T-cell (primary cell): ENCODE measurements at regions of chr4 and their contacts with region 1.

Region 1: GRCh38 chr4:145125396-145125795 is 27.3 kb downstream of the ABCE1 start:
- DNase-seq: no peak
- ATAC-seq: no peak
- H3K4me3 ChIP-seq: no peak overlapping the region
- H3K4me3 Mint-ChIP-seq: peak overlapping the region in 1 of 3 donors; percentile 17
- H3K27ac ChIP-seq: peak overlapping the region; percentile 75
- H3K27ac Mint-ChIP-seq: peak overlapping the region; percentile 64 to 89
- H3K4me1 ChIP-seq: peaks cover 0 to 5% of the 10 kb centered on the region in 2 experiments
- H3K4me1 Mint-ChIP-seq: peaks cover 0 to 18% (median 17%) of the 10 kb centered on the region in 3 donors
- H3K27me3 ChIP-seq: no peaks in the 10 kb centered on the region
- H3K27me3 Mint-ChIP-seq: no peaks in the 10 kb centered on the region

Region 2: DNA sequence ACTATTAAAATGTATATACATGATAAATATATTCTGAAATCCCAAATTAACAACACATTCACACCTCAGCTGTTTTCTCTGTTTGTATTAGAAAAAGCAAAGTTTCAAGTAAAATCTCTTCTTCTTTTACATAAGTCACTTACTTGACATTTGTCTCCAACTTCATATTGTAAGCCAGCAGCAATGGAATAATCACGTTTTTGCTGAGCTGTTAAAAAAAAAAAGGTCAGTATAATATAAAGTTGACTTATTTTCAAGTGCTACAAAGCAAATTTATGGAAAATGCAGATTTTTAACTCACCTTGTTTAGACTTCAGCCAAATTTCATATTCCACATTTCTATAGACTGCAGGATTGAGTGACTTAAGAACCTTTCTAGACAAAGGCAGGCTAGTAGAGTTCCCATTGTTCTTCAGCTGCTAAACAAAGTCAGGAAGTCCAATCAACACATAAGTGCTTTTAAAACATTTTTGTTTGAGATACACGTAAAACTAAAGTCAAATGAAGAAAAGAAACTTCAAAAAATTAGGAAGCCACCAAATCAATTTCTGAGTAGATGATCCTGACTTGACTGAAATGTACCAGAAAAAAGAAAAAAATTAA is 30.0 kb after region 1 on chr4:
- CTCF ChIA-PET with region 1: no interaction called
- POLR2A ChIA-PET with region 1: no interaction called
- DNase-seq: no peak
- ATAC-seq: no peak
- H3K4me3 ChIP-seq: no peak overlapping the region
- H3K4me3 Mint-ChIP-seq: no peak overlapping the region
- H3K27ac ChIP-seq: no peak overlapping the region
- H3K27ac Mint-ChIP-seq: no peak overlapping the region
- H3K4me1 ChIP-seq: no peaks in the 10 kb centered on the region
- H3K4me1 Mint-ChIP-seq: peaks cover 0 to 4% (median 2%) of the 10 kb centered on the region in 3 donors
- H3K27me3 ChIP-seq: no peaks in the 10 kb centered on the region
- H3K27me3 Mint-ChIP-seq: no peaks in the 10 kb centered on the region

Region 3: GRCh38 chr4:145186729-145187128 is 61.3 kb after region 1 on chr4:
- CTCF ChIA-PET with region 1: no interaction called
- POLR2A ChIA-PET with region 1: interaction called in 1 of 2 experiments, 10 read pairs
- DNase-seq: no peak
- ATAC-seq: no peak
- H3K4me3 ChIP-seq: no peak overlapping the region
- H3K4me3 Mint-ChIP-seq: no peak overlapping the region
- H3K27ac ChIP-seq: no peak overlapping the region
- H3K27ac Mint-ChIP-seq: no peak overlapping the region
- H3K4me1 ChIP-seq: no peaks in the 10 kb centered on the region
- H3K4me1 Mint-ChIP-seq: peaks cover 0 to 2% (median 0%) of the 10 kb centered on the region in 3 donors
- H3K27me3 ChIP-seq: no peaks in the 10 kb centered on the region
- H3K27me3 Mint-ChIP-seq: no peaks in the 10 kb centered on the region

Region 4: DNA sequence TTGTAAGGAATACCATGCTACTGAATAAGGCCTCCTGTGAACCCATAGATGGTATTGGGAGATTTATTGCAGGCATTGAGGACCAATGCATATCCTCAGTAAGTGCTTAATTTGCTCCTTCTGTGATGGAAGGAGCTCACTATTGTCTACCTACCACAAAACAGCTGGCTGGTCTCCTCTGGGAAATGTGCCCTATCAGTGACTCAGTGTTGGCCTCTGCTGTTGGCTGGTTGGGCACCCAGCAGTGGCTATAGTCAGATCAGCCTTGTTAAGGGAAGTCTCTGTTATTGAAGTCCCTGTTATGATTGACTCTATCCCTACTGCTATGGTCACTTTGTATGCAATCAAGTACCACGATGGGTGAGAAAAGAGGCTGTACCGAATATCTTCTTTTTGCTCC is 82.5 kb after region 1 on chr4:
- CTCF ChIA-PET with region 1: no interaction called
- POLR2A ChIA-PET with region 1: no interaction called
- DNase-seq: no peak
- ATAC-seq: no peak
- H3K4me3 ChIP-seq: no peak overlapping the region
- H3K4me3 Mint-ChIP-seq: no peak overlapping the region
- H3K27ac ChIP-seq: no peak overlapping the region
- H3K27ac Mint-ChIP-seq: no peak overlapping the region
- H3K4me1 ChIP-seq: no peaks in the 10 kb centered on the region
- H3K4me1 Mint-ChIP-seq: no peaks in the 10 kb centered on the region
- H3K27me3 ChIP-seq: no peaks in the 10 kb centered on the region
- H3K27me3 Mint-ChIP-seq: no peaks in the 10 kb centered on the region